ENCODE measurements at regions of chr9 and their contacts with region 1.

Region 1: DNA sequence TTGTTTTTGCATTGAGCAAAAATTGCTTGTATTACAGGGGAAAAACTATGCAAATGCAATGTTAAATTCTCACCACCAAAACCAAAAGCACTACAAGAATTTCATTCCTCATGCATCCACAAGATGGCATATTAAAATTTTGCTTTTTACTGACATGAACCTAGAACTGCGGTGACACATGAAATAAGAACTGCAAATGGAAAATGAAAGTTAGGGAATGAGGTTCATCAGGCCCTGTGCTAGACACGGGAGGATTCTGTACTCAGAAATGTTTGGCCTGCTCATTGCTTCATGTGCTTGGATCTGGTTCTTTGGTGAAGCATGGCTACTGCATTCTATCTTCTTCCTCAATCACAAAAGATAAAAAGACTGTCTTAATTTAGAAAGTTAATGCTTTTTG is 9.1 kb upstream of the RFK start:
- DNase-seq: peak; percentile 12
- H3K4me3 Mint-ChIP-seq: peak overlapping the region; percentile 25
- H3K27ac Mint-ChIP-seq: peak overlapping the region; percentile 32
- H3K4me1 Mint-ChIP-seq: peaks cover 23% of the 10 kb centered on the region
- H3K27me3 Mint-ChIP-seq: no peaks in the 10 kb centered on the region

Region 2: GRCh38 chr9:74479711-74480110 is 1923.6 kb before region 1 on chr9:
- intact Hi-C with region 1: no loop called
- DNase-seq: no peak
- H3K4me3 Mint-ChIP-seq: no peak overlapping the region
- H3K27ac Mint-ChIP-seq: no peak overlapping the region
- H3K4me1 Mint-ChIP-seq: no peaks in the 10 kb centered on the region
- H3K27me3 Mint-ChIP-seq: no peaks in the 10 kb centered on the region

Region 3: DNA sequence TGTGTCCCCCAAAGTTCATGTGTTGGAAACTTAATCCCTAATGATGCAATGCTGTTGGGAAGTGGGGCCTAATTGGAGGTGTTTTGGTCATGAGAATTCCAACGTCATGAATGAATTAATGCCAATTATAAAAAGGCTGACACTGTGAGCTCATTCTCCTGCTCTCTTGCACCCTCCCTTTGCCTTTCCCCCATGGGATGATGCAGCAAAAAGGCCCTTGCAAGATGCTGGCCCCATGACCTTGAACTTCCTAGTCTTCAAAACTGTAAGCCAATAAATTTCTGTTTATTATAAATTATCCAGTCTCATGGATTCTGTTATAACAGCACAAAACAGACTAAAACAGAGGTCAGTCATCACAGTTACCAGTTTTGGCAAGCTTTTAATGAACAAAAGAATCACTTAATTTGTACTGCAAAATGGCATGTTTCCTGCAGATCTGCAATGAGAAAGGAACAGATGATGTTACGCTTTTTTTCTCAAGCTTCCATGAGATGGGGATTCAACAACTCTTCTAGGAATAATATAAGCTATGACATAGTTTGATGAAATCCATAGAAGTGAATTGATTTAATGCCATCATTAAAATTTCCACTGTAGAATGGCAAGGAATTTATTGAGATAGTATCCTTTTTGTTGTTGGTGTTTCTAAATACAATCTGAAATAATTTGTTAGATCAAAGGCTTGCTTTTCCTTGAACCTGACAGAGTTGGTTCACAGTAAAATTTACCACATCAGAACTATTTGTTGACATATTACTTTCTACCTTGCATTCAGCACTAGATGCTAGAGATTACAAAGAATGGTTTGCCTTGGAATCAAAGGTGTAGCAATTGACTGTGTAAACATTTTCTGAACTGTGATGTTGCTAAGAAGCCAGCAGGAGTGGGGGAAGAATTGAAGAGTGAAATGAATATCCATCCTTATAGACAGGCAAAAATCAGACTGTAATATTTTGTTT is 20.1 kb after region 1 on chr9:
- intact Hi-C with region 1: loop called (anchors 1 kb)
- DNase-seq: no peak
- H3K4me3 Mint-ChIP-seq: peak overlapping the region; percentile 28
- H3K27ac Mint-ChIP-seq: peak overlapping the region; percentile 77
- H3K4me1 Mint-ChIP-seq: peaks cover 17% of the 10 kb centered on the region
- H3K27me3 Mint-ChIP-seq: no peaks in the 10 kb centered on the region

Region 4: DNA sequence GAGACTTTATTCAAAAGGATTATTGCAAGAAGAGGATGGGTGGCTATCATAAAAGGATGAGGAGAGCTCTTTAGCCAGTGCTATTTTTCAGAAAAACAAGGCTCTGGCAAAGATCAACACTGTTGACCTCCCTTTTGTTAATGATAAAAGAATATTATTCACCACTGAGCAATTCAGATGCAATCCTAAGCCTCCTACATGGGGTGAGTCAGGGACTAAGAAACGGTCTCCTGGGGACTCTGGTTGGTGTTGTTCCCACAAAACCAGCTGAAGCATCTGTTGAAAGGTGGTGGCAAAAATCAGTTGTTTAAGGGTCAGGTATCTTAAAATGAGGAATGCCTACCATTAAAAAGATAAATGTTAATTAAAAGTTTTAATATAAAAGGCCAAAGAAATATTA is 47.9 kb after region 1 on chr9:
- intact Hi-C with region 1: loop called (anchors 1 kb)
- DNase-seq: no peak
- H3K4me3 Mint-ChIP-seq: no peak overlapping the region
- H3K27ac Mint-ChIP-seq: no peak overlapping the region
- H3K4me1 Mint-ChIP-seq: peaks cover 24% of the 10 kb centered on the region
- H3K27me3 Mint-ChIP-seq: no peaks in the 10 kb centered on the region

Region 5: GRCh38 chr9:76458903-76459690 is 55.7 kb after region 1 on chr9 and contains the start of gene GCNT1:
- intact Hi-C with region 1: loop called (anchors 1 kb)
- DNase-seq: peak; percentile 92
- H3K4me3 Mint-ChIP-seq: peak within 1 kb of the TSS; percentile 87
- H3K27ac Mint-ChIP-seq: peak within 1 kb of the TSS; percentile 91
- H3K4me1 Mint-ChIP-seq: peaks cover 35% of the 10 kb centered on the region
- H3K27me3 Mint-ChIP-seq: peaks cover 3% of the 10 kb centered on the region
- total RNA-seq, gene GCNT1: 11.6 and 13.1 TPM in 2 replicates

Region 6: DNA sequence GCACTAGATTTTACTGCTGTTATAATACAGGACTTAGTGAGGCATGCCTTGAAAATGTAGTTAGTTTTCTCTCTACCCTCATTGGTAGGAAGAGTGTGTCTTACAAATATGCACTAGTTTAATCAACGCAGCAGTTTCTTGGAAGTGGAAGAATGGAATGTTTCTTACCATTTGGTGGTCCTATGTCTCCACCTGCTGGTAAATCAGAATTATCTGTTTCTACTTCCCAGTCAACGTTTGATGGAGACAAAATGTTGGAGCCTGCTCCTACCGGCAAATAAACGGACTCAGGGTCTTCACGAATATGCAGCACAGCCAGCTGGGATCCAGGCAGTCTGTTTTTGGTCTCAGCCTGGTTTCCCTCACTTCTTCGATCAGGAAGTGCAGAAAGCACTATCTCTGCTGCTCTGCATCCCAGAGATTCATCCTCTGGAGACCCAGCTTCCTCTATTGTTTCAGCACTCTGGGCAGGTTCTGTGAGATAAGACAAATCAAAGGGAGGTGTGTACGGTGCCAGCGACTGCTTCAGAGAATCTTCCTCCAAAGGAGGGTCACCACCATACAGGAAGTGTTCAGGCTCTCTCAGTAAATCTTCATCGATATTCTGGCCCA is 301.3 kb after region 1 on chr9:
- intact Hi-C with region 1: loop called (anchors 1 kb)
- DNase-seq: no peak
- H3K4me3 Mint-ChIP-seq: no peak overlapping the region
- H3K27ac Mint-ChIP-seq: no peak overlapping the region
- H3K4me1 Mint-ChIP-seq: peaks cover 6% of the 10 kb centered on the region
- H3K27me3 Mint-ChIP-seq: peaks cover 13% of the 10 kb centered on the region

Region 7: GRCh38 chr9:77032326-77032725 is 629.0 kb after region 1 on chr9:
- intact Hi-C with region 1: no loop called
- DNase-seq: no peak
- H3K4me3 Mint-ChIP-seq: no peak overlapping the region
- H3K27ac Mint-ChIP-seq: no peak overlapping the region
- H3K4me1 Mint-ChIP-seq: no peaks in the 10 kb centered on the region
- H3K27me3 Mint-ChIP-seq: peaks cover 10% of the 10 kb centered on the region

Measured in activated T-helper 1 cell treated with anti-CD3 and anti-CD28 coated beads, Interleukin-12 subunit alpha, Interleukin-12 subunit beta, Interleukin-2, Interleukin-4 antibody, amounts not matched to agents 30 ng/mL and 10 ng/mL and 1 ng/mL, durations not matched to agents 14 hours and 24 hours and 36 hours (primary cell).